IMR-90 (cell line): ENCODE measurements at regions of chr3 and their contacts with region 1.

Region 1: DNA sequence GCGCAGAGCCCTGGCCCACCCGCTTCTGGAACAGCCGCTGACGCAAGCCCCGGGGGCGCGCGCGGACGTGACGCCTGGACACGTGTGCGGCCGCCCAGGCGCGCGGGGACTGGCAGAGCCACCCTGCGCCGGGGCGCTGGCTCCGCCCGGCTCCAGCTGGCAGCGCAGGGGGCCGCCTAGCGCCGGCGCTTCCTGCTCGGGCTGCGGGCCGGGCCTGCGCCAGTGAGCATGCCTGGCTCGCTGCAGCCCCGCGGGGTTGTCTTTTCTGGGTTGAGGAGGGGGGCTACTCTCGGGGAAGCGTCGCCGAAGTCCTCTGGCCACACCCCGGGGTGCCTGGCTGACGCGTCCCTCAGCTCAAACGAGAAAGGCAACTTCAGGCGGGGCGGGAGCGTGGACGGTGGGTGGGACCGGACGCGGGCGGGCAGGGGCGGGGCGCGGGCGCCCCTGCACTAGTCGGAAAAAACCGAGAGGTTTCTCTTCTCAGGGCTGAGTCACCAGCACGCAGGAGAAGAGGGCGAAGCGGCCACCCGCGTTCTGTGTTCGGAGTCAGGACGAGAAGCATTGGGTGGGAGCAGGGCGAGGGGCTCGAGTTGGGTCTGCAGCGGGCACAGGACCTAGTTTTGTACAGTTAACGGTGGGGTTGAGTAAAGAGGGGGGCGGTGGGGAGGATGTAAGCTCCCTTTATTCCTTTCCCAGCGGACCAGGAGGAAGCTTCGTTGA is at the start of gene SIAH2:
- DNase-seq: peak; percentile 93
- ATAC-seq: peak; percentile 87
- H3K4me3 ChIP-seq: peak within 1 kb of the TSS; percentile 98
- H3K27ac ChIP-seq: peak within 1 kb of the TSS; percentile 94
- H3K4me1 ChIP-seq: peaks cover 9% of the 10 kb centered on the region; the same call in 1 of the 2 replicates
- H3K27me3 ChIP-seq: no peaks in the 10 kb centered on the region
- CTCF ChIP-seq: peak; percentile 11; the same call in 1 of the 2 replicates
- POLR2A ChIP-seq: peak; percentile 87
- RAD21 ChIP-seq: no peak
- total RNA-seq, gene SIAH2: 24.7 and 26.1 TPM in 2 replicates

Region 2: DNA sequence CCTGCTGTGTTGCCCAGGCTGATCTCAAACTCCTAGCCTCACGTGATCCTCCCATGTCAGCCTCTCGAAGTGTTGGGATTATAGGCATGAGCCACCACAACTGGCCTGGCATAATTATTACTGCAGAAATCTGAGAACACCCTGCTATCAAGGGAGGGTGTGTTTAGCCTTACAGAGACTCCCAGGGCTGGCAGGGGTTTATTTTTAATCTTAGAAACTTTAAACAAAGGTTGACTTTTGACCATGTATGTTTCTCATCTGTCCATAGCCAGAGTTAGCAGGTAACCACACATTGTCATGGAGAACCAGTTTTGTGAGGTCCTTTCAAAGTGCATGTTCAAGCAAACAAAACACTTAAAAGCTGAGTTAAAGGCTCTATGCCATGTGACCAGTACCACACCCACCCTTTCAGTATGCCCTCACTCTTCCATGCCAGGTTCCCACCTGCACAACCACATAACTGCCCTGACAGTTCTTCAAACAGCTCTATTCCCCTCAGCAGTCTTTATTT is 11.5 kb before region 1 on chr3:
- CTCF ChIA-PET with region 1: no interaction called
- POLR2A ChIA-PET with region 1: interaction called, 24 read pairs
- dilution Hi-C with region 1: no loop called
- in situ Hi-C with region 1: no loop called
- intact Hi-C with region 1: no loop called
- DNase-seq: no peak
- ATAC-seq: peak; percentile 41
- H3K4me3 ChIP-seq: no peak overlapping the region
- H3K27ac ChIP-seq: 0 out of 2 replicates have a peak overlapping the region, but pooled peaks have one; percentile 37
- H3K4me1 ChIP-seq: peaks cover 13% of the 10 kb centered on the region
- H3K27me3 ChIP-seq: no peaks in the 10 kb centered on the region
- CTCF ChIP-seq: no peak
- POLR2A ChIP-seq: no peak
- RAD21 ChIP-seq: no peak

Region 3: GRCh38 chr3:150800722-150801121 is 37.4 kb after region 1 on chr3:
- CTCF ChIA-PET with region 1: no interaction called
- POLR2A ChIA-PET with region 1: no interaction called
- dilution Hi-C with region 1: no loop called
- in situ Hi-C with region 1: no loop called
- intact Hi-C with region 1: no loop called
- DNase-seq: no peak
- ATAC-seq: no peak
- H3K4me3 ChIP-seq: no peak overlapping the region
- H3K27ac ChIP-seq: no peak overlapping the region
- H3K4me1 ChIP-seq: no peaks in the 10 kb centered on the region
- H3K27me3 ChIP-seq: peaks cover 26% of the 10 kb centered on the region
- CTCF ChIP-seq: no peak
- POLR2A ChIP-seq: no peak
- RAD21 ChIP-seq: no peak